K562 (cell line): ENCODE measurements at regions of chr14 and their contacts with region 1.

Region 1: GRCh38 chr14:67934008-67934481 is 114.5 kb downstream of the RAD51B start:
- DNase-seq: peak; percentile 19 to 53 (median 32)
- ATAC-seq: peak; percentile 89
- H3K4me3 ChIP-seq: no peak overlapping the region
- H3K27ac ChIP-seq: no peak overlapping the region
- H3K4me1 ChIP-seq: no peaks in the 10 kb centered on the region; a peak in 1 of 5 replicates
- H3K27me3 ChIP-seq: no peaks in the 10 kb centered on the region
- CTCF ChIP-seq: peak; percentile 58 to 67 (median 63)
- EP300 ChIP-seq: no peak
- POLR2A ChIP-seq: no peak
- RAD21 ChIP-seq: peak; percentile 55 to 73

Region 2: GRCh38 chr14:68824517-68825347 is 890.7 kb after region 1 on chr14:
- CTCF ChIA-PET with region 1: no interaction called
- POLR2A ChIA-PET with region 1: no interaction called
- in situ Hi-C with region 1: loop called (anchors 10 kb)
- intact Hi-C with region 1: no loop called
- DNase-seq: peak; percentile 80 to 87 (median 82)
- ATAC-seq: peak; percentile 98
- H3K4me3 ChIP-seq: no peak overlapping the region
- H3K27ac ChIP-seq: no peak overlapping the region
- H3K4me1 ChIP-seq: peaks cover 7 to 13% of the 10 kb centered on the region in 2 experiments; a peak in 4 of 5 replicates
- H3K27me3 ChIP-seq: no peaks in the 10 kb centered on the region
- CTCF ChIP-seq: peak; percentile 81 to 94 (median 84)
- EP300 ChIP-seq: peak; percentile 25; the same call in 1 of the 2 replicates
- POLR2A ChIP-seq: no peak
- RAD21 ChIP-seq: peak; percentile 58 to 81